Psoas muscle (tissue), 8 donors: ENCODE measurements at regions of chrX and their contacts with region 1.

Region 1: DNA sequence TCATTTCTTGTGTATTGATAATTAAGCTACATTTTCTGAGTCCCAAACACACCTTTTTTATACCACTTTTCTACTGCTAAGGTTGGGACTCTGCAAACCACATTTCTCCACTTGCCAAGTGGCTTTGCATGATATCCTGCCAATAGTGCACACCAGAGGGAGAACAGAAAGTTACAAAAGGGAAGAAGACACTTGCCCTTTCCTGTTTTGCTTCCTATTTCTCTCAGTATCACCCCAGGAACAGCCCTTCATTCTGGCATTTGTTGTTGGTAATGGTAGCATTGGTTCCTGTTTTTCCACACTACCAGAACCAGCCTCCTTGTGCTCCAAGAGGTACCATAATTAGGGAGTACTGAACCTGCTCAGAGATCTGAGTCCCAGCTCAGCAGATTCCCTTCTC is 87.1 kb downstream of the HDX start:
- DNase-seq: no peak
- ATAC-seq: no peak
- H3K4me3 ChIP-seq: no peak overlapping the region
- H3K27ac ChIP-seq: no peak overlapping the region
- H3K4me1 ChIP-seq: no peaks in the 10 kb centered on the region
- H3K27me3 ChIP-seq: no peaks in the 10 kb centered on the region
- CTCF ChIP-seq: no peak

Region 2: GRCh38 chrX:83906921-83907320 is 508.2 kb before region 1 on chrX:
- intact Hi-C with region 1: no loop called
- DNase-seq: no peak
- ATAC-seq: no peak
- H3K4me3 ChIP-seq: no peak overlapping the region
- H3K27ac ChIP-seq: no peak overlapping the region
- H3K4me1 ChIP-seq: no peaks in the 10 kb centered on the region
- H3K27me3 ChIP-seq: no peaks in the 10 kb centered on the region
- CTCF ChIP-seq: no peak

Region 3: GRCh38 chrX:84258708-84259107 is 156.4 kb before region 1 on chrX:
- intact Hi-C with region 1: no loop called
- DNase-seq: no peak
- ATAC-seq: no peak
- H3K4me3 ChIP-seq: no peak overlapping the region
- H3K27ac ChIP-seq: no peak overlapping the region
- H3K4me1 ChIP-seq: no peaks in the 10 kb centered on the region
- H3K27me3 ChIP-seq: no peaks in the 10 kb centered on the region
- CTCF ChIP-seq: no peak

Region 4: DNA sequence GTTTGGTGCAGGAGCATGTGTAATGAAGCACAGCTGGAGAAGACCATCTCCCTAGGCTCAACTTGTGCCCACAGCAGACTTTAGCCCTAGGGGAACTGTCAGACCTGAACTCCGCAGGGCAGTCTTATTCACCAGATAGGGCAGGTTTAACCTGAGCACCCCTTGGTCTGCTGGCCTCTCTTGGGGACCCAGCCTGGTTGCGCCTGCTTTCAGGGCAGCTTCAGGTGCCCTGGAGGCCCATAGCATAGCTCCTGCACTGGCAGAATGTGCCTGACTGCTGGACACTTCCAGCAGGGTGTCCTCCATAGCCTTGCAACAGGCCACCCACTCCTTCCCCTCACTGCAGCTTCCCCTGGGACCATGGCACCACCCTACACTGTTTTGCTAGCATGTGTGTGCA is 375.6 kb after region 1 on chrX:
- intact Hi-C with region 1: no loop called
- DNase-seq: no peak
- ATAC-seq: no peak
- H3K4me3 ChIP-seq: no peak overlapping the region
- H3K27ac ChIP-seq: no peak overlapping the region
- H3K4me1 ChIP-seq: no peaks in the 10 kb centered on the region
- H3K27me3 ChIP-seq: peaks cover 0 to 3% (median 0%) of the 10 kb centered on the region in 3 donors
- CTCF ChIP-seq: no peak

Region 5: GRCh38 chrX:84865113-84865512 is 450.0 kb after region 1 on chrX:
- intact Hi-C with region 1: loop called in 1 of 2 experiments (anchors 5 kb)
- DNase-seq: no peak
- ATAC-seq: no peak
- H3K4me3 ChIP-seq: no peak overlapping the region
- H3K27ac ChIP-seq: no peak overlapping the region
- H3K4me1 ChIP-seq: no peaks in the 10 kb centered on the region
- H3K27me3 ChIP-seq: no peaks in the 10 kb centered on the region
- CTCF ChIP-seq: no peak